ENCODE measurements at regions of chr1 and their contacts with region 1.

Region 1: GRCh38 chr1:223811634-223812415 is 33.9 kb downstream of the TP53BP2 start:
- DNase-seq: no peak
- H3K4me3 Mint-ChIP-seq: no peak overlapping the region
- H3K27ac Mint-ChIP-seq: no peak overlapping the region
- H3K4me1 Mint-ChIP-seq: peaks cover 14% of the 10 kb centered on the region
- H3K27me3 Mint-ChIP-seq: no peaks in the 10 kb centered on the region

Region 2: GRCh38 chr1:223825767-223826748 is 14.2 kb after region 1 on chr1:
- intact Hi-C with region 1: loop called (anchors 2 kb)
- DNase-seq: no peak
- H3K4me3 Mint-ChIP-seq: no peak overlapping the region
- H3K27ac Mint-ChIP-seq: no peak overlapping the region
- H3K4me1 Mint-ChIP-seq: peaks cover 34% of the 10 kb centered on the region
- H3K27me3 Mint-ChIP-seq: no peaks in the 10 kb centered on the region

Measured in activated T-helper 1 cell treated with anti-CD3 and anti-CD28 coated beads, Interleukin-12 subunit alpha, Interleukin-12 subunit beta, Interleukin-2, Interleukin-4 antibody, amounts not matched to agents 30 ng/mL and 10 ng/mL and 1 ng/mL, durations not matched to agents 14 hours and 24 hours and 36 hours (primary cell).